ENCODE measurements at regions of chr2 and their contacts with region 1.

Region 1: GRCh38 chr2:96509114-96509846 is 4.1 kb upstream of the NEURL3 start:
- DNase-seq: peak; percentile 84
- ATAC-seq: peak; percentile 99
- H3K4me3 ChIP-seq: no peak overlapping the region
- H3K27ac ChIP-seq: no peak overlapping the region
- H3K4me1 ChIP-seq: peaks cover 5% of the 10 kb centered on the region
- H3K27me3 ChIP-seq: peaks cover 31% of the 10 kb centered on the region
- CTCF ChIP-seq: peak; percentile 97
- POLR2A ChIP-seq: 0 out of 2 replicates have a peak, but pooled peaks have one; percentile 43
- RAD21 ChIP-seq: peak; percentile 98

Region 2: DNA sequence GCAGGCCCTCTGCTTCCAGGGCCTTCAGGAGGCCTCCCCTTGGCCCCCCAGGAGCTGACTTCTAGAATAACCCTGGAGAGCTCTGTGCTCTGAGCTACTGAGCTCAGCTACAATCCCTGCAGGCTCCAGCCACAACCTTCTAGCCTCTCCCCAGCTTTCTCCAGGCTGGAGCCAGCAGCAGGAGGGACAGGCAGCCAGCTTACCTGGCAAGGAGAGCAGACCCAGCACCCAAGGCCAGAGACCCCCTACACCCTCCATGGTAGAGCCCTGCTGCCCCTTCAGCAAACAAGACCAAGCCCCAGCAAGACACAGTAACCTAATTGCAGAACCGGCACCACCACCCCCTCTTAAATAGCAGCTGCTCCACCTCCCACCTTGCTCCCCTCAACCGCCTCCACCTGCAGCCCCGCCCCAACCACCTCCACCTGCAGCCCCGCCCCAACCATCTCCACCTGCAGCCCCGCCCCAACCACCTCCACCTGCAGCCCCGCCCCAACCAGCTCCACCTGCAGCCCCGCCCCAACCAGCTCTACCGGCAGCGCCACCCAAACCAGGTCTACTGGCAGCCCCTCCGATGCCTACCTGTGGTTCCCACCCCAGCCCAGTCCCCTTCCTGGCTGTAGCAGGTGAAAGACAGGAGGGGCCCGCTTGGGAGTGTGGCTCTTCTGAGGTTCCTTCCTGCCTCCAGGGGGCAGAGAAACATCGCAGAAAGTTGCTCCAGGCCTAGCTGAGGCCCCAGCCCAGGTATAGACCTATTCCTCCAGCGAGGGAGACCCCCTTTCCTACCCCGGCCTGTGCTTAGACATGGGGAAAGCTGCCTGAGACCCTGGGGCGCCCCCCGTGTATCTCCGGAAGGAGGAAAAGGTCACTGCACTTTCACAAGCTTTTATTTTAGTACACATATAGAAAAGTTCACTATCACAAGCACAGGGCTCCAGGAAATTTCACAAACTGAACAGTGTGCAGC is 370.8 kb before region 1 on chr2 and contains the start of gene ASTL:
- CTCF ChIA-PET with region 1: no interaction called
- POLR2A ChIA-PET with region 1: no interaction called
- dilution Hi-C with region 1: no loop called
- in situ Hi-C with region 1: no loop called
- intact Hi-C with region 1: loop called (anchors 2 kb)
- DNase-seq: peak; percentile 32
- ATAC-seq: peak; percentile 77; the same call in 1 of the 2 replicates
- H3K4me3 ChIP-seq: no peak within 1 kb of the TSS
- H3K27ac ChIP-seq: no peak within 1 kb of the TSS
- H3K4me1 ChIP-seq: no peaks in the 10 kb centered on the region
- H3K27me3 ChIP-seq: peaks cover 34% of the 10 kb centered on the region
- CTCF ChIP-seq: peak; percentile 63
- POLR2A ChIP-seq: peak; percentile 33
- RAD21 ChIP-seq: peak; percentile 79
- total RNA-seq, gene ASTL: not detected in 2 replicates

Region 3: DNA sequence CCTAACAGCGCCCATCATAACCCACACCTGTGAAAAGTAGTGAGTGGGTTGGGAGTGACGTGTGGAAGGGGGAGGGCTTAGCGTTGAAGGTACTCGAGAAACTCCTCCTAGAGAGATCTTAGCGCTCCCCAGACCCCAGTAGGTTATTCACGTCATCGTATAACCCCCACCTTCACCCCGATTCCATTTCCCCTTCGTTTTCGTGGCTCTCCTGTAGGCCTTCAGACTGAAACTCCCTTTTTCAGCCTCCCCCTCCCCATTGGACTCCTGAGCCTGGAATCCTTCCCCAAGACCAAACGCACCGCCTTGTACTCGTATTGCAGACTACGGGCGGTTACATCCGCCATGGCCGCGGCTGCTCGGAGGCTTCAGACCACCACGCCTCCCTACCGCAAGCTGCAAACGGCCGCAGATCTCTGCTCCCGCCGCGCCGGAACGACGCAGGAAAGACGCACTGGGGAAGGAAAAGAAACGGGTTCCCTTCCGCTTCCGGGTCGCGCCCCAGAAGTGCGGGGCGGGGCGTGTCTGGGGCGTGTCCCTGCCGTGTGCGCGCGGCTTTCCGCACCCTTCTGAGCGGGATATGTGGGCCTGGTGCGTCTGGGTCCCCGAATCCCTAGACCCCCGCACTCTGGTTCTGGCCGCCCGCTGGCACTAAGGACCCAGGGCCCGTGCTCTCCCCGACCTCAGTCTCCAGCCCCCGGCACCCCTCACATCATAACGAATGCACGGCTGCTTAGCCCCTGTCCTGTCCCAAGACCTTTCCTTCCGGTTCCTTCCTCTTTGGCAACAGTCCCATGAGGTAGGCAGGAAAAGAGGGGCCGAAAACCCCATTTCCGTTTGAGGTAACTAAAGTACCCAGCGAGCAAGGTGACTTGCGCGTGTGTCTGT is 203.9 kb before region 1 on chr2 and contains the start of gene SNRNP200:
- CTCF ChIA-PET with region 1: no interaction called
- POLR2A ChIA-PET with region 1: no interaction called
- dilution Hi-C with region 1: no loop called
- in situ Hi-C with region 1: loop called (anchors 10 kb)
- intact Hi-C with region 1: loop called (anchors 1 kb)
- DNase-seq: peak; percentile 72
- ATAC-seq: peak; percentile 99
- H3K4me3 ChIP-seq: peak within 1 kb of the TSS; percentile 97
- H3K27ac ChIP-seq: peak within 1 kb of the TSS; percentile 91
- H3K4me1 ChIP-seq: peaks cover 8% of the 10 kb centered on the region
- H3K27me3 ChIP-seq: no peaks in the 10 kb centered on the region
- CTCF ChIP-seq: no peak
- POLR2A ChIP-seq: peak; percentile 59; the same call in 1 of the 2 replicates
- RAD21 ChIP-seq: no peak
- total RNA-seq, gene SNRNP200: 44.1 and 44.2 TPM in 2 replicates

Region 4: DNA sequence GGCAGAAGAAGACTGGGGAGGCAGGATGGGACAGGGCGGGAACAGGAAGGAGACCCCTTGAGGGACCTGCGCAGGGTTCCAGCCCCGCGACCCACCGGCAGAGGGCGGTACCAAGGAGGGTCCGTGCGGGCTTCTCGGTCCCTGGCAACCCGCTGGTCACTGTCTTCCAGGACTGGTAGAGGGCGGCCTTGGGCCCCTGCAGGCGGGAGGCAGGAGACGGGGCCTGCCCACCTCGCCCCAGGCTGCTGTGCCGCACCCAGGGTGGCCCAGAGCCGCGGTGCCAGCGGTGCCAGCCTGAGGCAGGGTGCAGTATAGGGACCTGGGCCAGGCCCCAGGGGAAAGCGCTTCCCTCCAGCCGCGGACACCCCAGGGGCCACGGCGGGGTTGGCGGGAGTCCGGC is 38.6 kb before region 1 on chr2:
- CTCF ChIA-PET with region 1: interaction called, 3 read pairs
- POLR2A ChIA-PET with region 1: no interaction called
- dilution Hi-C with region 1: no loop called
- in situ Hi-C with region 1: no loop called
- intact Hi-C with region 1: loop called (anchors 1 kb)
- DNase-seq: peak; percentile 8
- ATAC-seq: peak; percentile 86
- H3K4me3 ChIP-seq: no peak overlapping the region; the same call in 1 of the 2 replicates
- H3K27ac ChIP-seq: no peak overlapping the region
- H3K4me1 ChIP-seq: no peaks in the 10 kb centered on the region; the same call in 1 of the 2 replicates
- H3K27me3 ChIP-seq: peaks cover 19% of the 10 kb centered on the region
- CTCF ChIP-seq: peak; percentile 51
- POLR2A ChIP-seq: no peak
- RAD21 ChIP-seq: peak; percentile 42

Measured in IMR-90 (cell line).